Prostate gland (tissue), 2 donors: ENCODE measurements at regions of chr10 and their contacts with region 1.

Region 1: DNA sequence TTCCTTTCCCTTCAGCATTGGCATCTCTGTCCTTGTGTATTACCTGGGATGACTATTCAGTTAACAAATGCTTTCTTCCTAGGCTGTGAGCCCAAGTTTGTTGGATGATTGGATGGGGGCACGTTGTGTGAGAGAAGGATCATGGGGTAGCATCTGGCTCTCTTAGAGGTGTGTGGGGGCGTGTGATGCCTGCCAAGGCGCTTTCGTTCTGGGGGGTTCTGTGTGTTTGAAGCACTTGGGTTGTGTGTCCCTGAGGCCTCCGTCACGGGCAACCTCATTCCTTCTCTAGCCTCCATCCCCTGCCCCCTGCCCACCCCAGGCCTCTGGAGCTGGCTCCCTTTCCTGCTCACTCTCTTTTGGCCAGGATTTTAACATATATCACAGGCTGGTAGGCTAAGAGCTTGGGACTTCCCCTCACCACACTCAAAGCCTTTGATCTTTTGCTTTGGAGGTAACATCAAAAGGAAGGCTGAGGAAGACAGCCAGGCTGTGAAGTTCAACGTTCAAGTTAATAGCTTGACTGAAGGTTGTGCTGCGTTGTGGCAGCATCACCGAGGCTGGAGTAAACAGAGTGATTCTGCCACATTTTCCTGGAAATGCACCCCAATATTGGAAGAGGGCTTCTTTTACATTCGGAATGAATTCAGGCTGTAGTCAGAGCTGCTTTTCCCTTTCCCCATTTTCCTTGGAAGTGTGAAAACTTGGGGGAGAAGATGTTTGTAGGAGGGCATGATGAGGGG is 57.2 kb downstream of the TCF7L2 start:
- DNase-seq: no peak
- H3K4me3 ChIP-seq: no peak overlapping the region
- H3K27ac ChIP-seq: no peak overlapping the region
- H3K4me1 ChIP-seq: no peaks in the 10 kb centered on the region
- H3K27me3 ChIP-seq: no peaks in the 10 kb centered on the region
- CTCF ChIP-seq: no peak
- POLR2A ChIP-seq: no peak

Region 2: GRCh38 chr10:112875476-112876267 is 131.5 kb before region 1 on chr10:
- intact Hi-C with region 1: no loop called
- DNase-seq: no peak
- H3K4me3 ChIP-seq: no peak overlapping the region
- H3K27ac ChIP-seq: no peak overlapping the region
- H3K4me1 ChIP-seq: no peaks in the 10 kb centered on the region
- H3K27me3 ChIP-seq: no peaks in the 10 kb centered on the region
- CTCF ChIP-seq: no peak
- POLR2A ChIP-seq: no peak

Region 3: GRCh38 chr10:112955582-112956421 is 51.4 kb before region 1 on chr10:
- intact Hi-C with region 1: loop called (anchors 5 kb)
- DNase-seq: no peak
- H3K4me3 ChIP-seq: peak overlapping the region in 1 of 2 donors; percentile 8
- H3K27ac ChIP-seq: peak overlapping the region; percentile 8 to 52
- H3K4me1 ChIP-seq: peaks cover 18% of the 10 kb centered on the region
- H3K27me3 ChIP-seq: no peaks in the 10 kb centered on the region
- CTCF ChIP-seq: no peak
- POLR2A ChIP-seq: no peak

Region 4: DNA sequence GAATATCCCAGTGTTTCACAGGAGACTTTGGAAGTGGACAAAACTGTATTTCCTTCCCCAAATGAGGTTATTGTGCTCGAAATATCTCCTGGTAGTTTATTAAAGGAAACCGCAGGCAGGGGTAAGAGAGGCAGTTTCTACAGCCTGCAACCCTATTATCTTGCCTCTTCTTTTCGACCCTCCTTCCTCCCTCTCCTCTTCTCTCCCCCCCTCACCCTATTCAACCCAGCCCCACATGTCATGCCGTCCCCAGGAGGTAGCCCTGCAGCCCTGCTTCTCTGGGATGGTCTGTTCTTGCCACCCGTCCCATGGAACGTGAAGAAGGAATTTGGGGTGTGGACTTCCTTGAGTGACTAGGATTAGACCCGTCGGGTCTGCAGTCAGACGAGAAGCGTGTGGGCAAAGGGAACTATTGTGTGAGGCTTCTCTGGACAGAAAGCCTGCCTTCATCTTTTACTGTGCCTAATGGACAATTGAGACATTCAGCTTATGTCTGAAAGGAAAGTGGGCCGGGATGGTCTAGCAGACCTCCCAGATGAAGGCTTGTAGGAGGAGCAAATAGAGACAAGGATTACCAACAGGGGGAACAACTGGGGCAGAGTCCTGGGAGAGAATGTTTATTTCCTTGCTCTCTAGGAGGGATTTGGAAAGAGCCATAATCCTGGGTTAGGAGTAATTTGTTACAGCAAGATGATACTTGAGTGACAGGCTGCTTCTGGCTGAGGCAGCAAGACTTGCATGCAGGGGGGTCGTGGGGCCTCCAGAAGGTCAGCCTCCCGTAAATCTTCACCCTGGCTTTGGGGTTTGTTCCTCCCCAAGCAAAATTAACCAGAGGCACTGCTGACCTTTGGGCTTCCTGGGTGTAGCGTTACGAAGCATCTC is 20.6 kb after region 1 on chr10:
- intact Hi-C with region 1: no loop called
- DNase-seq: no peak
- H3K4me3 ChIP-seq: no peak overlapping the region
- H3K27ac ChIP-seq: no peak overlapping the region
- H3K4me1 ChIP-seq: no peaks in the 10 kb centered on the region
- H3K27me3 ChIP-seq: no peaks in the 10 kb centered on the region
- CTCF ChIP-seq: no peak
- POLR2A ChIP-seq: no peak

Region 5: DNA sequence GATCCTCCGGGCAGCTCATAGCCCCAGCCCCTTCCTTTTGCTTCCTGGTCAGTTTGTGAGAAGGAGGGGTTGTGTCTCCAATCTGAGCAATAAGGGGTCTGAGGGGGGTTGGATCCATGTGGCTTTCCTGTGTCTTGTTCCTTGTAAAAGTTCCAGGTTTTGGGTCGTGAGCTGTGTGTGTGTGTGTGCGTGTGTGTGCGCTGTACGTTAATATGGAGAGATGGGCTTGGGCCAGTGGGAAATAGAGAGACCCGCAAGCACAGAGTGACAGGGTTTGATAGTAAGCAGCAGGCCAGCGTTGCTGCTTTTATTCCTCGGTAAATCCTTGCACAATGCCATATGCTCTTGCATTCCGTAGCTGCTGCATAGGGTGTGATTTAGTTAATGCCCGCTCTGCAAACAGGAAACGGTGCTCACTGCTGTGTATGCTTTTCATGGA is 51.3 kb after region 1 on chr10:
- intact Hi-C with region 1: no loop called
- DNase-seq: no peak
- H3K4me3 ChIP-seq: no peak overlapping the region
- H3K27ac ChIP-seq: no peak overlapping the region
- H3K4me1 ChIP-seq: peaks cover 6% of the 10 kb centered on the region
- H3K27me3 ChIP-seq: no peaks in the 10 kb centered on the region
- CTCF ChIP-seq: no peak
- POLR2A ChIP-seq: no peak